CD8-positive, alpha-beta T cell (primary cell): ENCODE measurements at regions of chr19 and their contacts with region 1.

Region 1: GRCh38 chr19:41872775-41873647 is 4.1 kb upstream of the CD79A start:
- DNase-seq: peak; percentile 49 to 83 (median 75)
- ATAC-seq: no peak
- H3K4me3 ChIP-seq: no peak overlapping the region
- H3K4me3 Mint-ChIP-seq: peak overlapping the region; percentile 40
- H3K27ac ChIP-seq: peak overlapping the region; percentile 4 to 76
- H3K27ac Mint-ChIP-seq: peak overlapping the region; percentile 98
- H3K4me1 ChIP-seq: peaks cover 94% of the 10 kb centered on the region
- H3K4me1 Mint-ChIP-seq: peaks cover 79% of the 10 kb centered on the region
- H3K27me3 ChIP-seq: no peaks in the 10 kb centered on the region
- H3K27me3 Mint-ChIP-seq: no peaks in the 10 kb centered on the region
- CTCF ChIP-seq: peak; percentile 79

Region 2: DNA sequence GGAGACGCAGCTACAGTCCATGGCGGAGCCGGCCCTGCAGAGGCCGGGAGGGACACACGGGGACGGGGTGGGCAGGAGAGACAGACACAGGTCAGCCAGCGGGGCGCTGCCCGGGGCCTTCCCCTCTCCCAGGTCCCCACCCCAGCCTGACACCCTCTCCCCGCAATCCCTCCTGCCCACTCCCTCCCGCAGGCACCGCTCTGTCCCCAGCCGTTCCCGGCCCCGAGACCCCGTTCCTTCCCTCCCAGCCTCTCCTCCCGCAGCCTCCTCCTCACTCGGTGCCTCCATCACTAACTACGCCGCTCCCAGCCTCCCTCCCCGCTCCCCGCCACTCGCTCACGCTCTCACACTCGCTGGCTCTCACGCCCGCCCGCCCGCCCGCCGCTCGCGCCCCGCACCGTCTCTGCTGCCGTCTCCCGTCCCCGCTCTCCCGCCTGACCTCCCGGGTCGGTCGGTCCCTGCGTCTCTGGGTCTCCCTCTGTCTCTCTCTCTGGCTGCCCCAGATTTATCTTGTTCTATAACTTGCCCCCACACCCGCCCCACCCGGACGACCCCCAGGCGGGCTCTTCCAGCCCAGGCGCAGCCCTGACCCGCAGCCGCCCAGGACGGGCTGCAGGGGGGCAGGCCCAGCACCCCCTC is 40.0 kb after region 1 on chr19:
- CTCF ChIA-PET with region 1: interaction called, 44 read pairs
- POLR2A ChIA-PET with region 1: interaction called, 13 read pairs
- intact Hi-C with region 1: loop called in 1 of 2 experiments (anchors 1 kb)
- DNase-seq: peak in 3 of 9 experiments; percentile 50 to 56 (median 54)
- ATAC-seq: peak; percentile 15
- H3K4me3 ChIP-seq: no peak overlapping the region
- H3K4me3 Mint-ChIP-seq: peak overlapping the region; percentile 26
- H3K27ac ChIP-seq: no peak overlapping the region
- H3K27ac Mint-ChIP-seq: no peak overlapping the region
- H3K4me1 ChIP-seq: peaks cover 70% of the 10 kb centered on the region
- H3K4me1 Mint-ChIP-seq: peaks cover 43% of the 10 kb centered on the region
- H3K27me3 ChIP-seq: peaks cover 0 to 52% of the 10 kb centered on the region in 2 experiments
- H3K27me3 Mint-ChIP-seq: peaks cover 3% of the 10 kb centered on the region
- CTCF ChIP-seq: no peak

Region 3: GRCh38 chr19:41934849-41935374 is 61.9 kb after region 1 on chr19:
- CTCF ChIA-PET with region 1: interaction called, 23 read pairs
- POLR2A ChIA-PET with region 1: interaction called, 7 read pairs
- intact Hi-C with region 1: loop called (anchors 1 kb)
- DNase-seq: peak; percentile 63 to 89 (median 81)
- ATAC-seq: peak; percentile 37
- H3K4me3 ChIP-seq: no peak overlapping the region
- H3K4me3 Mint-ChIP-seq: peak overlapping the region; percentile 32
- H3K27ac ChIP-seq: no peak overlapping the region
- H3K27ac Mint-ChIP-seq: peak overlapping the region; percentile 84
- H3K4me1 ChIP-seq: peaks cover 45% of the 10 kb centered on the region
- H3K4me1 Mint-ChIP-seq: peaks cover 55% of the 10 kb centered on the region
- H3K27me3 ChIP-seq: peaks cover 0 to 5% of the 10 kb centered on the region in 2 experiments
- H3K27me3 Mint-ChIP-seq: no peaks in the 10 kb centered on the region
- CTCF ChIP-seq: peak; percentile 87

Region 4: DNA sequence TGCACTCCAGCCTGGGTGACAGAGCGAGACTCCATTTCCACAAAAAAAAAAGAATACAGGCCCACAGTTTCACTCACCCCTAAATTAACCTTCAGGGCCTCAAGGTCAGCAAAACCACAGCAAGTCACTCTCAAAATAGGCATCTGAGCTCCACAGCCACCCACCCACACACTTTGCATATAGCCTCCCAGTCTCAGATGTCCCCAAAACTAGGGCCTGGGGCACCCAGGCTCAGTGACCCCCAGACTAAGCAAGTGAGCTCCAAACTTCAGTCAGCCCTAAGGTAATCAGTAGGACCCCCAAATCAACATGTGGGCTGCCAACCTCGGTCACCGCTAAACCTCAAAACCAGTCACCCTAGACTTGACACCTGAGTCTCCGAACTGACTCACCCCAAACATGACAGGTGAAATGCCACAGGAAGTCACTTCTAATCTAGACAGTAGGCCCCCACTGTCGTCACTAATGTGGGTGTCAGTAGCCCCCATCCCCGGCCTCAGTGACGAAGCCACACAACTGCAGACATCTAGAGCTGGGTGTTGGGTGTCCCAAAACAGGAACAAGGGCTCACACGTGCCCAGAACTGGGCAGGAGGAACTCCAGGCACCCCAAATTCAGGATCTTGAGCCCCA is 72.2 kb after region 1 on chr19:
- CTCF ChIA-PET with region 1: interaction called, 66 read pairs
- POLR2A ChIA-PET with region 1: interaction called, 16 read pairs
- intact Hi-C with region 1: loop called in 1 of 2 experiments (anchors 1 kb)
- DNase-seq: peak; percentile 80 to 98 (median 91)
- ATAC-seq: peak; percentile 82
- H3K4me3 ChIP-seq: no peak overlapping the region
- H3K4me3 Mint-ChIP-seq: peak overlapping the region; percentile 69
- H3K27ac ChIP-seq: peak overlapping the region; percentile 62 to 66
- H3K27ac Mint-ChIP-seq: peak overlapping the region; percentile 99
- H3K4me1 ChIP-seq: peaks cover 40% of the 10 kb centered on the region
- H3K4me1 Mint-ChIP-seq: peaks cover 61% of the 10 kb centered on the region
- H3K27me3 ChIP-seq: peaks cover 0 to 4% of the 10 kb centered on the region in 2 experiments
- H3K27me3 Mint-ChIP-seq: no peaks in the 10 kb centered on the region
- CTCF ChIP-seq: no peak

Region 5: DNA sequence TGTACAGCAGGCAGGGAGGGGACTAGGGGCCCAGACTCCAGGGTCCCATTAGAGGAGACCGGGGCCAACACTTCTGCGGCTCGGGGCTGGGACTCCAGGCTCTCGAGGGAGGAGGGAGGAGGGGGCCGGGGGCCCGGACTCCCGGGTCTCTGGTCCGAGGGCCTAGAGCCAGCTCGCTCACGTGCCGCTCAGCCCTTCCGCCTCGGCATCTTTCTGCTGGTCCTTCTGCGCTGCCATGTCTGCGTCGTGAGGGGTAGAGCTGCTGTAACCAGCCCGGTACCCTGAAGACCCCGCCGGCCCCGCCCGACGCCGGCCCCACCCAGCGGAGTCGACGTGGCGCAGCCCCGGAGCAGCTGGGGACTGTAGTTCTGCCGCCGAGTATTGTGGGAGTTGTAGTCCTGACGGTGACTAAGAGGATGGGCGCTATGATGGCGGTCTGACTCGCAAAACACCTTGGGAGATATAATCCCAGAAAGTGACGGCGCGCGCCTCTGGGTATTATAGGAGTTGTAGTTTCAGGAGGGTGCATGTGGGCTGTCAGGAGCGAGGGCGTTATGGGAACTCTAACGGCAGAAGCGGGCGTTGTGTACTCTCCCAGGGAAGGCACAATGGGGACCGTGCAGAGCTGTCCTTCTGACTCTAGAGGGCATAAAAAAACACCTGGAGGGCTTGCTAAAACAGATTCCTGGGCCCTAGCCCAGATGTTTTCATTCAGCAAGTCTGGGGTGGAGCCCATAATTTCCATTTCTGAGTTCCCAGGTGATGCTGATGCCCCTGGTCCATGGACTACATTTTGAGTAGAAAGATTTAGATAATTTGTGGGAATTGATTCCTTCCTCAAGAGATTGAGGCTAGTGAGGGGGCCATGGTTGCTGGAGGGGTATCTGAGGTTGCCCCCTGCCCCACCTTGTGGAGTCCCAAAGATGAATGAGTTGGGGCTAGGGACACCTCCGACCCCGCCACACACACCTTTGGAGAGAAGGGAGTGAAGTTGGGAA is 86.3 kb after region 1 on chr19 and contains the start of gene RABAC1:
- CTCF ChIA-PET with region 1: interaction called, 11 read pairs
- POLR2A ChIA-PET with region 1: interaction called, 5 read pairs
- intact Hi-C with region 1: loop called in 1 of 2 experiments (anchors 2 kb)
- DNase-seq: peak; percentile 73 to 93 (median 90)
- ATAC-seq: peak; percentile 87
- H3K4me3 ChIP-seq: peak within 1 kb of the TSS; percentile 80 to 91
- H3K4me3 Mint-ChIP-seq: peak within 1 kb of the TSS; percentile 97
- H3K27ac ChIP-seq: peak within 1 kb of the TSS; percentile 55 to 82
- H3K27ac Mint-ChIP-seq: peak within 1 kb of the TSS; percentile 96
- H3K4me1 ChIP-seq: peaks cover 16% of the 10 kb centered on the region
- H3K4me1 Mint-ChIP-seq: peaks cover 23% of the 10 kb centered on the region
- H3K27me3 ChIP-seq: no peaks in the 10 kb centered on the region
- H3K27me3 Mint-ChIP-seq: no peaks in the 10 kb centered on the region
- CTCF ChIP-seq: peak; percentile 26
- total RNA-seq, gene RABAC1: 99.5 to 114 TPM

Region 6: GRCh38 chr19:42121656-42122069 is 248.7 kb after region 1 on chr19:
- CTCF ChIA-PET with region 1: no interaction called
- POLR2A ChIA-PET with region 1: no interaction called
- intact Hi-C with region 1: no loop called
- DNase-seq: peak; percentile 24 to 90 (median 81)
- ATAC-seq: peak; percentile 89
- H3K4me3 ChIP-seq: peak overlapping the region; percentile 19 to 27
- H3K4me3 Mint-ChIP-seq: peak overlapping the region; percentile 66
- H3K27ac ChIP-seq: peak overlapping the region; percentile 36 to 82
- H3K27ac Mint-ChIP-seq: peak overlapping the region; percentile 95
- H3K4me1 ChIP-seq: peaks cover 49% of the 10 kb centered on the region
- H3K4me1 Mint-ChIP-seq: peaks cover 59% of the 10 kb centered on the region
- H3K27me3 ChIP-seq: no peaks in the 10 kb centered on the region
- H3K27me3 Mint-ChIP-seq: no peaks in the 10 kb centered on the region
- CTCF ChIP-seq: no peak

Region 7: GRCh38 chr19:42166316-42166715 is 293.3 kb after region 1 on chr19:
- CTCF ChIA-PET with region 1: no interaction called
- POLR2A ChIA-PET with region 1: no interaction called
- intact Hi-C with region 1: no loop called
- DNase-seq: no peak
- ATAC-seq: no peak
- H3K4me3 ChIP-seq: no peak overlapping the region
- H3K4me3 Mint-ChIP-seq: no peak overlapping the region
- H3K27ac ChIP-seq: no peak overlapping the region
- H3K27ac Mint-ChIP-seq: no peak overlapping the region
- H3K4me1 ChIP-seq: no peaks in the 10 kb centered on the region
- H3K4me1 Mint-ChIP-seq: no peaks in the 10 kb centered on the region
- H3K27me3 ChIP-seq: no peaks in the 10 kb centered on the region
- H3K27me3 Mint-ChIP-seq: no peaks in the 10 kb centered on the region
- CTCF ChIP-seq: no peak